ENCODE measurements at regions of chr19 and their contacts with region 1.

Region 1: GRCh38 chr19:7652061-7652641 is 15.2 kb downstream of the STXBP2 start:
- DNase-seq: peak; percentile 88
- ATAC-seq: peak; percentile 87
- H3K4me3 Mint-ChIP-seq: peak overlapping the region; percentile 44
- H3K27ac Mint-ChIP-seq: 0 out of 2 replicates have a peak overlapping the region, but pooled peaks have one; percentile 11
- H3K4me1 Mint-ChIP-seq: peaks cover 7% of the 10 kb centered on the region
- H3K27me3 Mint-ChIP-seq: peaks cover 59% of the 10 kb centered on the region
- CTCF ChIP-seq: peak; percentile 99

Region 2: DNA sequence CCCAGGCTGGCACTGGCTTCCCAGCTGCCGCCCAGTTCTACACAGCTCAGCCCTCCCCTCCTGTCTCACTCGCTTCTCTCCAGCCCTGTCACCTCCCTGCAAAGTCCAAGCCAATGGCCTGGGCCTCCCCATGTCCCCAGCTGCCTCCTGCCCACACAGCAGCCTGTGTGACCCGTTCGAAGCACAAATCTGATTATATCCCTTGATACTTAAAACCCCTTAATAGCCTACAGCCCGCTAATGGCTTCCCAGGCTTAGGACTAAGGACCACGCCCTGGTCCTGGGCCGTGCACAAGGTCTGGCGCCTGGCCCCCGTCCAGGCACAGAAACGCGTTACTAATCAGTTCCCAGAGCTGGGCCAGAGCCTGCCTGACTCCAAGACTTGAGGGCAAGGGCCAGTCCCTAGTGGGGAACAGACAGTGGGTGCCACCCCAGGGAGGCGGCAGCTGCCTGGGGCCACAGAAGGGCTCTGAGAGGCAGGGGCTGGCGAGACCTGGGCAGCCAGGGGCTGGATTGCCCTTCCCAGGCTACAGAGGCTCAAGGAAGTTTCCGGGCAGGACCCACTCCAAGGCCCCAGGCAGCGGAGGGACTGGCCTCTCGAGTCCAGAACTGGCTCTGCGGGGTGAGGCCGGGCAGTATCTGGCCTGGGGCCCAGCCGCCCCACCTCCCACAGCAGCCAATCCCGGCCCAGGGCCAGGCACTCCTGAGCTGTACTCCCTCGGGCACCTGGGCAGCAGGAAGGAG is 33.2 kb before region 1 on chr19:
- CTCF ChIA-PET with region 1: no interaction called
- POLR2A ChIA-PET with region 1: no interaction called
- DNase-seq: no peak
- ATAC-seq: no peak
- H3K4me3 Mint-ChIP-seq: no peak overlapping the region
- H3K27ac Mint-ChIP-seq: no peak overlapping the region
- H3K4me1 Mint-ChIP-seq: no peaks in the 10 kb centered on the region
- H3K27me3 Mint-ChIP-seq: no peaks in the 10 kb centered on the region; the same call in 1 of the 2 replicates
- CTCF ChIP-seq: no peak

Region 3: GRCh38 chr19:7629347-7630054 is 22.6 kb before region 1 on chr19 and contains the starts of genes PET100 and XAB2:
- CTCF ChIA-PET with region 1: interaction called, 4 read pairs
- POLR2A ChIA-PET with region 1: interaction called, 12 read pairs
- DNase-seq: peak; percentile 92
- ATAC-seq: peak; percentile 95
- H3K4me3 Mint-ChIP-seq: peak within 1 kb of the TSS; percentile 90
- H3K27ac Mint-ChIP-seq: peak within 1 kb of the TSS; percentile 98
- H3K4me1 Mint-ChIP-seq: peaks cover 24% of the 10 kb centered on the region
- H3K27me3 Mint-ChIP-seq: peaks cover 6% of the 10 kb centered on the region
- CTCF ChIP-seq: no peak
- total RNA-seq, gene PET100: 111 to 126 TPM (median 122 TPM) in 3 replicates
- total RNA-seq, gene XAB2: 65.7 to 71.9 TPM (median 67.4 TPM) in 3 replicates